Activated CD8-positive, alpha-beta T cell treated with anti-CD3 and anti-CD28 coated beads for 36 hours (primary cell): ENCODE measurements at regions of chr11 and their contacts with region 1.

Region 1: DNA sequence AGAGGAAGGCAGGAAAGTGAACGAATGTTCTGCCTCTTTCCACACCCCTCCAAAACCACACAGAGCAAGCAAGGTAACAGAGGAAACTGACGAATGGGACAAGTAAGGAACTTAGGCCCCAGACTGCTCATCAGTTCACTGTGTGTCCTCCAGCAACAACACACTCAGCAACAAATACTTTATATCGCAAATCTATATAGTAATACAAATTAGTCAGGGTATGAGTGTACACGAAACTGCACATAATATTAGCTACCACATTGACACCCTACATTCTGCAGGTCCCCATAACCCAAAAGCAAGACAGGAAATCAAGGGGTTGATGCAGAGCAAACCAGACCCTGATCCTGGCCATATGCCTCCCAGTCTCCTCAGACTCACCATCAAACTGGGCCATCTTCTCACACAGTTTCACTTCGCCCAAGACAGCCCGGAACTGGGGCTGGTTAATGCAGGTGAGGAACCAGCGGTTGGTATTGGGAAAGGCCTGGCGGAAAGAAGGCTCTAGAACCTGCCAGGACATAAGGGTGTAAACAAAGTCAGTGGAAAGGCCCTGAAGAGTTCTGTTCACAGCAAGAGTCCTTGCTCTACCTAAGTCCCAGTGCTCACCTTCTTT is 6.6 kb downstream of the EEF1G start:
- DNase-seq: no peak
- ATAC-seq: peak; percentile 49
- H3K4me3 Mint-ChIP-seq: no peak overlapping the region
- H3K27ac Mint-ChIP-seq: peak overlapping the region; percentile 61
- H3K4me1 Mint-ChIP-seq: peaks cover 57% of the 10 kb centered on the region
- H3K27me3 Mint-ChIP-seq: no peaks in the 10 kb centered on the region
- CTCF ChIP-seq: no peak

Region 2: GRCh38 chr11:62421996-62422395 is 145.1 kb before region 1 on chr11:
- CTCF ChIA-PET with region 1: interaction called, 29 read pairs
- POLR2A ChIA-PET with region 1: interaction called, 3 read pairs
- intact Hi-C with region 1: no loop called
- DNase-seq: no peak
- ATAC-seq: no peak
- H3K4me3 Mint-ChIP-seq: no peak overlapping the region
- H3K27ac Mint-ChIP-seq: no peak overlapping the region
- H3K4me1 Mint-ChIP-seq: peaks cover 12% of the 10 kb centered on the region
- H3K27me3 Mint-ChIP-seq: peaks cover 5% of the 10 kb centered on the region
- CTCF ChIP-seq: no peak

Region 3: GRCh38 chr11:62607714-62608113 is 40.6 kb after region 1 on chr11:
- CTCF ChIA-PET with region 1: no interaction called
- POLR2A ChIA-PET with region 1: no interaction called
- intact Hi-C with region 1: no loop called
- DNase-seq: peak; percentile 32
- ATAC-seq: no peak
- H3K4me3 Mint-ChIP-seq: no peak overlapping the region
- H3K27ac Mint-ChIP-seq: no peak overlapping the region
- H3K4me1 Mint-ChIP-seq: peaks cover 46% of the 10 kb centered on the region
- H3K27me3 Mint-ChIP-seq: no peaks in the 10 kb centered on the region
- CTCF ChIP-seq: no peak